CD4-positive, alpha-beta memory T cell (primary cell): ENCODE measurements at regions of chr14 and their contacts with region 1.

Region 1: DNA sequence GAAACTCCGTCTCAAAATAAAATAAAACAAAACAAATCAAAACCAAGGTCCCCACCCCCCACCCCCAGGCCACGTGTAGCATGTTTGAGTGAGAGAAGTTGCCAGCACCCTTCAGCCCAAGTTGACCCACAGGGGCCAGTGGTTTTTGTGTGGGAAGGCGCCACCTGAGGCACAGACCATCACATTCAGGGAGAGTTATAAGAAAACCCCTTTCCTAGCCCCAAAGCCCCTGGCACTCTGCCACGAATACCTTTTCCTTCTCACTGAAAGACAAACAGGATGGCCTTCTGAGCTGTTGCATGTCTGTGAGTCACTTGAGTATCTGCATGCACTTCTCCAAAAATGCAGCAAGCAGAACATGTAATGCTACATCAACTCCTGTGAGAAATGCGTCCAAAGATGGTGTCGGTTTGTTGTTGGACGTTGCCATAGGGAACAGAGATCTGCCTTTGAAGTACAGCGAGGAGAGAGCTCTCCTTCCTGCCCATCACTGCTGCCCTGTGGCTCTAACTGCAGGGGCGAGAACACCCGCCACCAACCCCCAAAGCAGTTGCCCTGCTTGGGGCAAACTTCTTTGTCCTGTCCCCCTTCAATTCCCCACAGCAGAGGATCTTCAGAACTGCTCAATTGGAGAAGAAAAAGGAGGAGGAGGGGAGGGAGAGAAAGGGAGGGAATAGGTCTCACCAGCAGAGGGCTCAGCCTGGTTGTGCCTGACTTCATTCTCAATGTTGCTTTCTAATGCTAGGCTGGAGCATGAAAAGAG is 2.7 kb upstream of the TRAF3 start:
- DNase-seq: peak; percentile 77 to 92 (median 82)
- H3K4me3 ChIP-seq: no peak overlapping the region
- H3K4me3 Mint-ChIP-seq: peak overlapping the region; percentile 28 to 82 (median 69)
- H3K27ac ChIP-seq: peak overlapping the region; percentile 64
- H3K27ac Mint-ChIP-seq: peak overlapping the region; percentile 92 to 98 (median 96)
- H3K4me1 ChIP-seq: peaks cover 35% of the 10 kb centered on the region
- H3K4me1 Mint-ChIP-seq: peaks cover 22 to 49% (median 31%) of the 10 kb centered on the region in 4 donors
- H3K27me3 ChIP-seq: no peaks in the 10 kb centered on the region
- H3K27me3 Mint-ChIP-seq: peaks cover 0 to 3% of the 10 kb centered on the region in 2 donors

Region 2: GRCh38 chr14:102086972-102087761 is 687.4 kb before region 1 on chr14 and contains the start of gene HSP90AA1:
- CTCF ChIA-PET with region 1: no interaction called
- POLR2A ChIA-PET with region 1: no interaction called
- intact Hi-C with region 1: loop called (anchors 2 kb)
- DNase-seq: peak; percentile 90 to 95 (median 94)
- H3K4me3 ChIP-seq: peak within 1 kb of the TSS; percentile 80 to 85
- H3K4me3 Mint-ChIP-seq: peak within 1 kb of the TSS; percentile 91 to 99 (median 97)
- H3K27ac ChIP-seq: peak within 1 kb of the TSS; percentile 94
- H3K27ac Mint-ChIP-seq: peak within 1 kb of the TSS; percentile 93 to 99 (median 97)
- H3K4me1 ChIP-seq: peaks cover 51% of the 10 kb centered on the region
- H3K4me1 Mint-ChIP-seq: peaks cover 46 to 68% (median 56%) of the 10 kb centered on the region in 4 donors
- H3K27me3 ChIP-seq: no peaks in the 10 kb centered on the region
- H3K27me3 Mint-ChIP-seq: no peaks in the 10 kb centered on the region
- total RNA-seq, gene HSP90AA1: 275 to 297 TPM

Region 3: GRCh38 chr14:102785584-102785942 is 11.0 kb after region 1 on chr14:
- CTCF ChIA-PET with region 1: interaction called, 11 read pairs
- POLR2A ChIA-PET with region 1: no interaction called
- intact Hi-C with region 1: no loop called
- DNase-seq: no peak
- H3K4me3 ChIP-seq: no peak overlapping the region
- H3K4me3 Mint-ChIP-seq: peak overlapping the region in 6 of 8 donors; percentile 2 to 52 (median 10)
- H3K27ac ChIP-seq: no peak overlapping the region
- H3K27ac Mint-ChIP-seq: peak overlapping the region in 5 of 7 donors; percentile 1 to 47 (median 5)
- H3K4me1 ChIP-seq: peaks cover 77% of the 10 kb centered on the region
- H3K4me1 Mint-ChIP-seq: peaks cover 55 to 89% (median 70%) of the 10 kb centered on the region in 4 donors
- H3K27me3 ChIP-seq: no peaks in the 10 kb centered on the region
- H3K27me3 Mint-ChIP-seq: no peaks in the 10 kb centered on the region

Region 4: DNA sequence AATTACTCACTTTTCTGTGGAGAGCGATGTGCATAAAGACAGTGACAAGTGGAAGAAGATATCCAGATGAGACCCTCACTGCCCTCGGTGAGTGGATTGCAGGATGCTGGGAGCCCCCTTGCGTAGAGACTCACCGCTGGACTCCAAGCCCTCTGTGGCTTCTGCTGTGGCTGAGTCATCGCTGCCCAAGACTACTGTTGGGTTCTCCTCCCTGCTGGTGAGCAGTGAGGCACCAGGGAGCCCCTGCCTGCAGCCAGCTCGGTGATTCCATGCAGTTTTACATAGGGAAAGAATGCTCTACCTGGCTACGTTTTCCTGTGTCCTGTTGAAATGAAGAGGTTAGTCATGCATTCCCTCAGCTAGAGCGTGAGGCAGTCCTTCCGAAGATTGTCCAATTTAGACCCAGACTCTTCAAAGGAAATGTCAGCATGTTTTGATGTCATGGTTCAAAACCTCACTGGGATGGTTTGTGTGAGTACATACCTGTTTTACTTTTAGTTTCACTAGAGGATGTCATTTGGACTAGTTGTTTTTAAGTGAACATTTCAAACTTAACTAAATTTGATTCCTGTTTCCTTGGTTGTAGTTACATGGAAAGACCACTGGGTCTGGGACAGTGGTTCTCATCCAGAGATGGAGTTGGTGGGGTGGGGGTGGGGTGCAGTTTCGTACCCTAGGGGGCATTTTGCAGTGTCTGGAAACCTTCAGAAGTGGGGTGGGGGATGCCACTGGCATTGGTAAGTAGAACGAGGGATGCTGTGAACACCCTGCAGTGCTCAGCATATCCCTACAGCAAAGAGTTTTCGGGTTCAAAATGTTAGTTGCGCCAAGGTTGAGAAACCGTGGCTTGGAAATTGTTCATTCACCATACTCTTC is 31.0 kb after region 1 on chr14:
- CTCF ChIA-PET with region 1: interaction called, 3 read pairs
- POLR2A ChIA-PET with region 1: interaction called, 4 read pairs
- intact Hi-C with region 1: loop called (anchors 2 kb)
- DNase-seq: peak; percentile 39 to 72 (median 44)
- H3K4me3 ChIP-seq: peak overlapping the region in 1 of 2 donors; percentile 43
- H3K4me3 Mint-ChIP-seq: peak overlapping the region; percentile 77 to 91 (median 84)
- H3K27ac ChIP-seq: peak overlapping the region; percentile 58
- H3K27ac Mint-ChIP-seq: peak overlapping the region; percentile 94 to 97 (median 96)
- H3K4me1 ChIP-seq: peaks cover 52% of the 10 kb centered on the region
- H3K4me1 Mint-ChIP-seq: peaks cover 45 to 70% (median 60%) of the 10 kb centered on the region in 4 donors
- H3K27me3 ChIP-seq: no peaks in the 10 kb centered on the region
- H3K27me3 Mint-ChIP-seq: no peaks in the 10 kb centered on the region

Region 5: GRCh38 chr14:102878174-102878969 is 103.8 kb after region 1 on chr14:
- CTCF ChIA-PET with region 1: interaction called, 10 read pairs
- POLR2A ChIA-PET with region 1: no interaction called
- intact Hi-C with region 1: no loop called
- DNase-seq: no peak
- H3K4me3 ChIP-seq: no peak overlapping the region
- H3K4me3 Mint-ChIP-seq: no peak overlapping the region
- H3K27ac ChIP-seq: no peak overlapping the region
- H3K27ac Mint-ChIP-seq: peak overlapping the region in 2 of 7 donors; percentile 4 to 30
- H3K4me1 ChIP-seq: no peaks in the 10 kb centered on the region
- H3K4me1 Mint-ChIP-seq: peaks cover 0 to 7% (median 2%) of the 10 kb centered on the region in 4 donors
- H3K27me3 ChIP-seq: no peaks in the 10 kb centered on the region
- H3K27me3 Mint-ChIP-seq: no peaks in the 10 kb centered on the region

Region 6: GRCh38 chr14:102917469-102918211 is 143.1 kb after region 1 on chr14:
- CTCF ChIA-PET with region 1: interaction called, 15 read pairs
- POLR2A ChIA-PET with region 1: interaction called, 3 read pairs
- intact Hi-C with region 1: loop called (anchors 1 kb)
- DNase-seq: peak in 4 of 5 donors; percentile 34 to 46 (median 43)
- H3K4me3 ChIP-seq: no peak overlapping the region
- H3K4me3 Mint-ChIP-seq: no peak overlapping the region
- H3K27ac ChIP-seq: no peak overlapping the region
- H3K27ac Mint-ChIP-seq: peak overlapping the region in 3 of 7 donors; percentile 2 to 87 (median 10)
- H3K4me1 ChIP-seq: no peaks in the 10 kb centered on the region
- H3K4me1 Mint-ChIP-seq: peaks cover 0 to 1% (median 0%) of the 10 kb centered on the region in 4 donors
- H3K27me3 ChIP-seq: no peaks in the 10 kb centered on the region
- H3K27me3 Mint-ChIP-seq: no peaks in the 10 kb centered on the region

Region 7: GRCh38 chr14:103057365-103058096 is 283.0 kb after region 1 on chr14 and contains the start of gene CDC42BPB:
- CTCF ChIA-PET with region 1: no interaction called
- POLR2A ChIA-PET with region 1: no interaction called
- intact Hi-C with region 1: loop called (anchors 10 kb)
- DNase-seq: peak; percentile 58 to 66 (median 64)
- H3K4me3 ChIP-seq: peak within 1 kb of the TSS in 1 of 2 donors; percentile 47
- H3K4me3 Mint-ChIP-seq: peak within 1 kb of the TSS; percentile 66 to 86 (median 79)
- H3K27ac ChIP-seq: no peak within 1 kb of the TSS
- H3K27ac Mint-ChIP-seq: peak within 1 kb of the TSS in 2 of 7 donors; percentile 39 to 57
- H3K4me1 ChIP-seq: peaks cover 6% of the 10 kb centered on the region
- H3K4me1 Mint-ChIP-seq: peaks cover 9 to 13% (median 11%) of the 10 kb centered on the region in 4 donors
- H3K27me3 ChIP-seq: no peaks in the 10 kb centered on the region
- H3K27me3 Mint-ChIP-seq: peaks cover 6 to 10% of the 10 kb centered on the region in 2 donors
- total RNA-seq, gene CDC42BPB: 7.5 to 8.4 TPM